ENCODE measurements at regions of chr7 and their contacts with region 1.

Region 1: GRCh38 chr7:47179812-47180515 is 401.9 kb downstream of the TNS3 start:
- DNase-seq: peak; percentile 40
- H3K4me3 ChIP-seq: no peak overlapping the region
- H3K27ac ChIP-seq: no peak overlapping the region
- H3K4me1 ChIP-seq: peaks cover 3% of the 10 kb centered on the region
- H3K27me3 ChIP-seq: no peaks in the 10 kb centered on the region
- CTCF ChIP-seq: peak; percentile 29 to 76 (median 68)
- POLR2A ChIP-seq: no peak

Region 2: GRCh38 chr7:45917658-45918057 is 1262.3 kb before region 1 on chr7:
- intact Hi-C with region 1: loop called (anchors 2 kb)
- DNase-seq: peak; percentile 70
- H3K4me3 ChIP-seq: no peak overlapping the region
- H3K27ac ChIP-seq: no peak overlapping the region
- H3K4me1 ChIP-seq: no peaks in the 10 kb centered on the region
- H3K27me3 ChIP-seq: no peaks in the 10 kb centered on the region
- CTCF ChIP-seq: peak; percentile 86 to 94 (median 91)
- POLR2A ChIP-seq: no peak

Region 3: GRCh38 chr7:47080816-47081215 is 99.1 kb before region 1 on chr7:
- intact Hi-C with region 1: no loop called
- DNase-seq: no peak
- H3K4me3 ChIP-seq: no peak overlapping the region
- H3K27ac ChIP-seq: no peak overlapping the region
- H3K4me1 ChIP-seq: no peaks in the 10 kb centered on the region
- H3K27me3 ChIP-seq: no peaks in the 10 kb centered on the region
- CTCF ChIP-seq: no peak
- POLR2A ChIP-seq: no peak

Region 4: GRCh38 chr7:47254081-47255006 is 74.4 kb after region 1 on chr7:
- intact Hi-C with region 1: loop called (anchors 2 kb)
- DNase-seq: peak; percentile 67
- H3K4me3 ChIP-seq: peak overlapping the region; percentile 42 to 43
- H3K27ac ChIP-seq: peak overlapping the region; percentile 72 to 78
- H3K4me1 ChIP-seq: no peaks in the 10 kb centered on the region
- H3K27me3 ChIP-seq: no peaks in the 10 kb centered on the region
- CTCF ChIP-seq: peak; percentile 91 to 96 (median 95)
- POLR2A ChIP-seq: no peak

Measured in prostate gland (tissue), 2 donors.